Natural killer cell (primary cell): ENCODE measurements at regions of chr19 and their contacts with region 1.

Region 1: DNA sequence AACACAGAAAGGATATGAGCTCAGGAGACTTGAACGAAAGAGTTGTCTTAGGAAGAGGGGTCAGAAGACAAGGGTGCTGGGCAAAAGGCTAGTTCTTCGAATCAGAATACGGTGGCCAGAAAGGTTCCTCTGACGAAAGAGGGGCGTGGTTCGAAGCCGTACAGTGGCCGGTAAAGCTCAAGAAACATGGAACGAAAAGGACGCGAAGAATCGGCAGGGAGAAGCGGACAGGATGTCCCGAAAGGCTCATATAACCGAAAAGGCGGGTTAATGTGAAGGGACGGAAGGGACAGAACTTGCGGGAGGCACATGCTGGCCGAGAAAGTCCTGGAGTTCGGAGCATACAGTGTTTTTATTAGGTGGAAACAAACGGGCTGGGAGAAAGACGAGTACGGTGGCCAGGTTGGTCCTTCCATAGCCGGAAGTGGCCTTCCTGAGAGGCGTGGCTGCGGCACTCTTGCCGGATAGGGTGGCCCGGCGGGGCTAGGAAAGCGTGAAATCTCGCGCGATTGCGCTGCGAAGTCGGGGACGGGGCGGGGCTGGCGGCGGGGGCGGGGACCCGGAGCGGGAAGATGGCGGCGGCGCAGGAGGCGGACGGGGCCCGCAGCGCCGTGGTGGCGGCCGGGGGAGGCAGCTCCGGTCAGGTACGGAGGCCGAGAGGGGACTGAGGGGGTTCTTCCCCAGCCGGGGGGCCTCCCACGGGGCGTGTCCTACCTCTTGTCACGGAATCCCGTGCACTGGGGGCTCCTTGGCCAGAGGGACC is at the start of gene CLPTM1:
- DNase-seq: peak; percentile 93 to 98
- ATAC-seq: peak; percentile 90 to 97 (median 92)
- H3K4me3 ChIP-seq: peak within 1 kb of the TSS; percentile 92
- H3K4me3 Mint-ChIP-seq: peak within 1 kb of the TSS; percentile 96
- H3K27ac ChIP-seq: peak within 1 kb of the TSS; percentile 84
- H3K27ac Mint-ChIP-seq: peak within 1 kb of the TSS; percentile 94 to 95
- H3K4me1 ChIP-seq: peaks cover 39% of the 10 kb centered on the region
- H3K4me1 Mint-ChIP-seq: peaks cover 48% of the 10 kb centered on the region in 2 donors
- H3K27me3 ChIP-seq: no peaks in the 10 kb centered on the region
- H3K27me3 Mint-ChIP-seq: no peaks in the 10 kb centered on the region
- CTCF ChIP-seq: no peak
- total RNA-seq, gene CLPTM1: 97.1 to 125 (median 120) TPM

Region 2: GRCh38 chr19:44689056-44689895 is 265.7 kb before region 1 on chr19:
- intact Hi-C with region 1: loop called (anchors 5 kb)
- DNase-seq: peak; percentile 69 to 88
- ATAC-seq: peak; percentile 49 to 72 (median 71)
- H3K4me3 ChIP-seq: no peak overlapping the region
- H3K4me3 Mint-ChIP-seq: no peak overlapping the region
- H3K27ac ChIP-seq: no peak overlapping the region
- H3K27ac Mint-ChIP-seq: peak overlapping the region in 1 of 2 donors; percentile 51
- H3K4me1 ChIP-seq: peaks cover 32% of the 10 kb centered on the region
- H3K4me1 Mint-ChIP-seq: peaks cover 0 to 28% of the 10 kb centered on the region in 2 donors
- H3K27me3 ChIP-seq: no peaks in the 10 kb centered on the region
- H3K27me3 Mint-ChIP-seq: peaks cover 3 to 6% of the 10 kb centered on the region in 2 donors
- CTCF ChIP-seq: peak; percentile 86

Region 3: DNA sequence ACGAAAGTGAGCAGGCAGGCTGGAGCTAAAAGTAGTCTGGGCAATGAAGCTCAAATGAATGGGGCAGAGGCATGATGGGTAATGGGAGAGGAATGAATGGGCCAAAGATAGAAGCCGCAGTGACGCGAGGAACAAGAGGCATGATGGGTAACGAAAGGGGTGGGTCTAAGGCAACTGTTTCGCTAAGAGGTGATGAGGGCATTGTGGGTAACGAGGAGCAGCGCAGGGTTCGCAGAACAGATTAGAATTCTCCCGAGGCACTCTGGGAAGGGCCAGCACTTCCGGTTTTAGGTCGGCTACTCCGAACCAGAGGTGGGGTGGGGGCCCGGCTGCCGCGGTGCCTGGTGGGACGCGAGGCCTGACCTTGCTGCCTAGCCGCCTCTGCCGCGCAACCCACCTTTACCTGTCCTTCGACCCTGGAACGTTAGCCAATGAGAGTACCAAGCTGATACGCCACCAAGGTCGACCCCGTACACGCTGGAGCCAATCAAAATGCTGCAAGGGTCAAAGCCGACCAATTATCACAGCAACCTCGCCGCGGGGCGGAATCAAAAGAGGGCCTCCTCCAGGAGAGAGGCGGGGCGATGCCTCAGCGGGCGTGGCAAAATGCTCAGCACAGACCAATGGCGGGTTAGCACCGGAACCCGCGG is 64.5 kb before region 1 on chr19:
- intact Hi-C with region 1: loop called (anchors 1 kb)
- DNase-seq: peak; percentile 100
- ATAC-seq: peak; percentile 76 to 90 (median 78)
- H3K4me3 ChIP-seq: peak overlapping the region; percentile 72
- H3K4me3 Mint-ChIP-seq: peak overlapping the region; percentile 88
- H3K27ac ChIP-seq: peak overlapping the region; percentile 98
- H3K27ac Mint-ChIP-seq: peak overlapping the region; percentile 88 to 91
- H3K4me1 ChIP-seq: peaks cover 21% of the 10 kb centered on the region
- H3K4me1 Mint-ChIP-seq: peaks cover 25 to 30% of the 10 kb centered on the region in 2 donors
- H3K27me3 ChIP-seq: no peaks in the 10 kb centered on the region
- H3K27me3 Mint-ChIP-seq: no peaks in the 10 kb centered on the region
- CTCF ChIP-seq: no peak

Region 4: GRCh38 chr19:44903602-44904425 is 51.2 kb before region 1 on chr19:
- intact Hi-C with region 1: loop called (anchors 1 kb)
- DNase-seq: peak; percentile 79
- ATAC-seq: peak; percentile 73 to 92 (median 80)
- H3K4me3 ChIP-seq: no peak overlapping the region
- H3K4me3 Mint-ChIP-seq: no peak overlapping the region
- H3K27ac ChIP-seq: no peak overlapping the region
- H3K27ac Mint-ChIP-seq: no peak overlapping the region
- H3K4me1 ChIP-seq: peaks cover 4% of the 10 kb centered on the region
- H3K4me1 Mint-ChIP-seq: peaks cover 6 to 8% of the 10 kb centered on the region in 2 donors
- H3K27me3 ChIP-seq: peaks cover 12% of the 10 kb centered on the region
- H3K27me3 Mint-ChIP-seq: peaks cover 18 to 22% of the 10 kb centered on the region in 2 donors
- CTCF ChIP-seq: peak; percentile 98

Region 5: GRCh38 chr19:45001087-45001739 is 46.2 kb after region 1 on chr19 and contains the start of gene RELB:
- intact Hi-C with region 1: loop called (anchors 1 kb)
- DNase-seq: peak; percentile 98 to 99
- ATAC-seq: peak; percentile 56 to 83 (median 69)
- H3K4me3 ChIP-seq: peak within 1 kb of the TSS; percentile 92
- H3K4me3 Mint-ChIP-seq: peak within 1 kb of the TSS; percentile 98
- H3K27ac ChIP-seq: peak within 1 kb of the TSS; percentile 100
- H3K27ac Mint-ChIP-seq: peak within 1 kb of the TSS; percentile 97 to 98
- H3K4me1 ChIP-seq: peaks cover 15% of the 10 kb centered on the region
- H3K4me1 Mint-ChIP-seq: peaks cover 9 to 11% of the 10 kb centered on the region in 2 donors
- H3K27me3 ChIP-seq: no peaks in the 10 kb centered on the region
- H3K27me3 Mint-ChIP-seq: no peaks in the 10 kb centered on the region
- CTCF ChIP-seq: no peak
- total RNA-seq, gene RELB: 92.4 to 119 (median 105) TPM